Activated naive CD4-positive, alpha-beta T cell treated with anti-CD3 and anti-CD28 coated beads for 36 hours (primary cell): ENCODE measurements at regions of chr14 and their contacts with region 1.

Region 1: DNA sequence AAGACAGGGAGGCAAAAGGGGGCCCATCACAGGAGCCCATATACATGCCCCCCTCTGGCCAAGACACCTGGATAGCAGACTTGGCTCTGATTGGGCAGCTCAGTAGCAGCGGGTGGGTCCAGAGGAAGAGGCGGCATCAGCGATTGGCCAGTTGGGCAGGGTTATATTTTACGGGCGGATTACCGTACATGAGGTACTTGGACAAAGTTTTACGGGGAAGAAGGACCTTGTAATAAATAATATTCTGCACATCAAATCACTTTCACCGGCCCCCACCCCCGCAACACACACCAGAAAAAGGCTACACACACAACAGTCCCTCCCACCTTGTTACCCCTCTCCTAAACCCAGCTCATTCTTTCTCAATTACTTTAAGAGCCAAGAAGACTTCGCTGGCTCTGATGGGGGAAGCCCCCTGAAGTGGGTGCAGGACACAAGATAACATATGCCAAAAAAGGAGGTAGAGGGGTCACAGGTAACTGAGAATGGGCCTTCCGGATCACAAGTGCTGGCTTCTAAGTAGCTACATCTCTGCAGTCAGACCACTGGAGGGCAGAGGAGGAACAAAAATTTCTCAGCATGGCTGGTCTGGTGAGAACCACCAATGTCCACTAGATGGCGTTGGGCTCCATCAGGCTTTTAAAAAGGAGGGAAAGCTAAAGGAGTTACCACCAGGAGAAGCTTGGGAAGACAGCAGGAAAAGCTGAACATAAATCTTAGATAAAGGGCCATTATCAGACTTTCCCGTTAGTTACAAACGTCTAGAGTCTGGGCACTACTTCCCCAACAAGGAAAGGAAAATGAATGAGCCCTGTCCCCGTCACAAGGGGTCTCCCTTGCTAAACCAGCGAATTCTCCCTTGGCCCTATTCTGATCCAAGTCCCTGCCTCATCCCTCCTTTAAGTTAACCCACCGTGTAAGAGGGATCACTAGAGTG is 11.4 kb upstream of the CDH24 start:
- DNase-seq: peak; percentile 88
- H3K4me3 Mint-ChIP-seq: peak overlapping the region; percentile 15
- H3K27ac Mint-ChIP-seq: peak overlapping the region; percentile 30
- H3K4me1 Mint-ChIP-seq: peaks cover 41% of the 10 kb centered on the region
- H3K27me3 Mint-ChIP-seq: no peaks in the 10 kb centered on the region

Region 2: DNA sequence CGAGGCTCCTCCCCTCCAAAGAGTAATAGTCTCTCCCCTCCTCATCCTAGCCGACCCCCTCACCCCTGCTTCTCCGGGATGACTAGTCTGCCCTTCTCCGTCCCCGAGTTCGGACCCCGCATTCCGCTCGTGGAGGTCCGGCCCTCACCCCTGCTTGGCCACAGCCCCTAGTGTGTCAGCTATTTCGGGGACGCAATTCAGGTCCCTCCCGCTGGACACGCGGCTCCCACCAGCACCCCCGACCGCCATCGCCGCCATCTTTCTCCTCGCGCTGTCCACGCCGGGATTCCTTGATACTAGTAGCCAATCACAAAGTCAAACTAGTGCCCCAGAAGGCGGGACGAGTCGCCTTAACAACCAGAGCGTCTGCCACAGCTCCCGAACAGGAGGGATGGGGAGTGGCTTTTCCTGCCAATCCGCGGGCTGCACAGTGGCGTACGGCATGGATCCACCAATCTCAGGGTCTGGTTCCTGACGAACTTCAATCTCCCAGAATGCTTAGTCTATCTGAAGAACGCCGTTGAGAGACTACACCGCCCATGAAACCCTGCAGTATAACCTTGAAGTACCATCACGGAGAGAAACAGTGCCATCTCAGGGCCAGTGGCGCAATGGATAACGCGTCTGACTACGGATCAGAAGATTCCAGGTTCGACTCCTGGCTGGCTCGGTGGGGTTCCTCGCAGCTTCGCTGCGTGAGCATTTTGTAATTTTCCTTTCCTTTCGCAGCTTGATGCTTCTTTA is 139.5 kb before region 1 on chr14 and contains the start of gene PRMT5:
- CTCF ChIA-PET with region 1: interaction called, 4 read pairs
- intact Hi-C with region 1: loop called (anchors 1 kb)
- DNase-seq: peak; percentile 99
- H3K4me3 Mint-ChIP-seq: no peak within 1 kb of the TSS
- H3K27ac Mint-ChIP-seq: no peak within 1 kb of the TSS
- H3K4me1 Mint-ChIP-seq: peaks cover 34% of the 10 kb centered on the region
- H3K27me3 Mint-ChIP-seq: no peaks in the 10 kb centered on the region
- total RNA-seq, gene PRMT5: 81.0 to 92.8 TPM

Region 3: GRCh38 chr14:22994762-22995275 is 73.9 kb before region 1 on chr14:
- CTCF ChIA-PET with region 1: interaction called, 713 read pairs
- intact Hi-C with region 1: no loop called
- DNase-seq: peak; percentile 56
- H3K4me3 Mint-ChIP-seq: no peak overlapping the region
- H3K27ac Mint-ChIP-seq: no peak overlapping the region
- H3K4me1 Mint-ChIP-seq: no peaks in the 10 kb centered on the region
- H3K27me3 Mint-ChIP-seq: no peaks in the 10 kb centered on the region

Region 4: GRCh38 chr14:23034483-23035302 is 34.1 kb before region 1 on chr14 and contains the start of gene PSMB5:
- CTCF ChIA-PET with region 1: interaction called, 25 read pairs
- intact Hi-C with region 1: loop called (anchors 1 kb)
- DNase-seq: peak; percentile 96
- H3K4me3 Mint-ChIP-seq: peak within 1 kb of the TSS; percentile 88
- H3K27ac Mint-ChIP-seq: peak within 1 kb of the TSS; percentile 96
- H3K4me1 Mint-ChIP-seq: peaks cover 34% of the 10 kb centered on the region
- H3K27me3 Mint-ChIP-seq: no peaks in the 10 kb centered on the region
- total RNA-seq, gene PSMB5: 120 to 125 TPM

Region 5: DNA sequence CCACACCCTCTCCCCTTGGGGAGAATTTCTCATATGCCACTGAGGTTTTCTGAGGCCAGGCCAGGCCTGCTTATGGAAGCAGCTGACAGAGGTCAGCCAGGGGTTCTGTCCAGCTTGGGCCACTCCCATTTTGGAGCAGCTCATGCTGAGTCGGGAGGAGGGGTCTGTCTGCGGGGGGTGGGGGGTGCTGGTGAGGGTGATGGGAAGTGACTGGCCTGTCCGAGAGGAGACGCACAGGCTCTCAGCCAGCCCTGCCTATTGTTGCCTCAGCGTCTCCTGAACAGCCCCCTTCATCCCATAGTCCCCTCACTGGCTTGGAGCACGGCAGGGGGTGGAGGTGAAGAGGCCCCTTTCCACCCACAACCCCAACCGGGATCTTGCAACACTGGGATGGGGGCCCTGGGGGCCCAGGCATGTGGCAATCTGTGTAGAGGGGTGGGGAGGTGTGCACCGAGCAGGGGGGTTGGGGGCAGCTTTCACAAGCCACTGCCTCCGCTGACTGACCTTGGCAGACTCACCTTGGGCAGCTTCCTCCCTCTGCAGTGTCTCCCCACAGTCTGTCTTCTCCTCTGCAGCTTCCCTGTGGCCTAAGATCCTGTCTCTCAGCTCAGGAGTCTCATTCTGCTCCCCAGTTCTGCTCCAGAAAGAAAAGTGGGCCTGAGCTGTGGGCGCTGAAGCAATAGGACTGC is 44.8 kb after region 1 on chr14:
- CTCF ChIA-PET with region 1: interaction called, 30 read pairs
- intact Hi-C with region 1: loop called (anchors 1 kb)
- DNase-seq: no peak
- H3K4me3 Mint-ChIP-seq: no peak overlapping the region
- H3K27ac Mint-ChIP-seq: no peak overlapping the region
- H3K4me1 Mint-ChIP-seq: peaks cover 15% of the 10 kb centered on the region
- H3K27me3 Mint-ChIP-seq: no peaks in the 10 kb centered on the region

Region 6: GRCh38 chr14:23286020-23286905 is 217.5 kb after region 1 on chr14 and contains the start of gene HOMEZ:
- CTCF ChIA-PET with region 1: no interaction called
- intact Hi-C with region 1: loop called (anchors 5 kb)
- DNase-seq: peak; percentile 99
- H3K4me3 Mint-ChIP-seq: peak within 1 kb of the TSS; percentile 99
- H3K27ac Mint-ChIP-seq: peak within 1 kb of the TSS; percentile 96
- H3K4me1 Mint-ChIP-seq: peaks cover 29% of the 10 kb centered on the region
- H3K27me3 Mint-ChIP-seq: no peaks in the 10 kb centered on the region
- total RNA-seq, gene HOMEZ: 6.3 to 7.8 TPM

Region 7: GRCh38 chr14:23379366-23380196 is 310.8 kb after region 1 on chr14:
- CTCF ChIA-PET with region 1: no interaction called
- intact Hi-C with region 1: loop called (anchors 1 kb)
- DNase-seq: peak; percentile 66
- H3K4me3 Mint-ChIP-seq: no peak overlapping the region
- H3K27ac Mint-ChIP-seq: no peak overlapping the region
- H3K4me1 Mint-ChIP-seq: no peaks in the 10 kb centered on the region
- H3K27me3 Mint-ChIP-seq: no peaks in the 10 kb centered on the region